CD8-positive, alpha-beta T cell (primary cell): ENCODE measurements at regions of chr12 and their contacts with region 1.

Region 1: GRCh38 chr12:13278249-13278787 is 81.8 kb downstream of the EMP1 start:
- DNase-seq: peak; percentile 13 to 73 (median 61)
- ATAC-seq: peak; percentile 64
- H3K4me3 ChIP-seq: no peak overlapping the region
- H3K4me3 Mint-ChIP-seq: no peak overlapping the region
- H3K27ac ChIP-seq: no peak overlapping the region
- H3K27ac Mint-ChIP-seq: no peak overlapping the region
- H3K4me1 ChIP-seq: no peaks in the 10 kb centered on the region
- H3K4me1 Mint-ChIP-seq: peaks cover 6% of the 10 kb centered on the region
- H3K27me3 ChIP-seq: peaks cover 0 to 6% of the 10 kb centered on the region in 2 experiments
- H3K27me3 Mint-ChIP-seq: peaks cover 44% of the 10 kb centered on the region
- CTCF ChIP-seq: peak; percentile 93

Region 2: DNA sequence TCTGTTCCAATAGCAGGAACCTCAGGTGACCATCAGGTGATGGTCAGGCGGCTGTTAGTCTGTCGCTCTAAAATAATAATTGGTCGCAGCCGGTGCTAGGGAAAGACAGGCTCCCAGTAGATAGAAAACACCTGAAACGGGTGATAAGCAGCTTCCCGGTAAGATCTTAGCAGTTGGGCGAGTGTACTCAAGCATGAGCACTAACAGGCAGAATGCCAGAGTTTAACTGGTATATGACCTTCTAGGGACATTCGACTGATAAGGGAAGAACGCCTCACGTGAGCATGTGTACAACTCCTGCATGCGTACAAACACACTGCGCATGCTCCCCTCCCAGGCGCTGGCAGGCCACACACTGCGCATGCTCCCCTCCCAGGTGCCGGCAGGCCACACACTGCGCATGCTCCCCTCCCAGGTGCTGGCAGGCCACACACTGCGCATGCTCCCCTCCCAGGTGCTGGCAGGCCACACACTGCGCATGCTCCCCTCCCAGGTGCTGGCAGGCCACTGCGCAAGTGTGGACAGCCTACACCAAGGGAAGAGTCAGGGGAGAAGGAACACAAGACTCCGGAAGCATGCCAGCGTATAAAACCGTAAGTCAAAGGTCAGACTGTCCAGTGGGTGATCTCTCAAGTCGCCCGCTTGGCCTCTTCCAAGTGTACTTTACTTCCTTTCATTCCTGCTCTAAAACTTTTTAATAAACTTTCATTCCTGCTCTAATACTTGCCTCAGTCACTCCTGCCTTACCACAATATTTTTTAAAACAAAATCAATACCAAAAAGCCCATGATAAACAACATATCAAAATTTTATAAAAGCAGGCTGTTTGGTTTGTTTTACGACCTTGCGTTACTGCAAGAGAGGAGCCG is 350.9 kb before region 1 on chr12:
- CTCF ChIA-PET with region 1: no interaction called
- POLR2A ChIA-PET with region 1: no interaction called
- intact Hi-C with region 1: no loop called
- DNase-seq: peak in 6 of 9 experiments; percentile 1 to 70 (median 36)
- ATAC-seq: no peak
- H3K4me3 ChIP-seq: peak overlapping the region in 1 of 2 experiments; percentile 22
- H3K4me3 Mint-ChIP-seq: no peak overlapping the region
- H3K27ac ChIP-seq: no peak overlapping the region
- H3K27ac Mint-ChIP-seq: no peak overlapping the region
- H3K4me1 ChIP-seq: no peaks in the 10 kb centered on the region
- H3K4me1 Mint-ChIP-seq: no peaks in the 10 kb centered on the region
- H3K27me3 ChIP-seq: no peaks in the 10 kb centered on the region
- H3K27me3 Mint-ChIP-seq: peaks cover 10% of the 10 kb centered on the region
- CTCF ChIP-seq: no peak

Region 3: DNA sequence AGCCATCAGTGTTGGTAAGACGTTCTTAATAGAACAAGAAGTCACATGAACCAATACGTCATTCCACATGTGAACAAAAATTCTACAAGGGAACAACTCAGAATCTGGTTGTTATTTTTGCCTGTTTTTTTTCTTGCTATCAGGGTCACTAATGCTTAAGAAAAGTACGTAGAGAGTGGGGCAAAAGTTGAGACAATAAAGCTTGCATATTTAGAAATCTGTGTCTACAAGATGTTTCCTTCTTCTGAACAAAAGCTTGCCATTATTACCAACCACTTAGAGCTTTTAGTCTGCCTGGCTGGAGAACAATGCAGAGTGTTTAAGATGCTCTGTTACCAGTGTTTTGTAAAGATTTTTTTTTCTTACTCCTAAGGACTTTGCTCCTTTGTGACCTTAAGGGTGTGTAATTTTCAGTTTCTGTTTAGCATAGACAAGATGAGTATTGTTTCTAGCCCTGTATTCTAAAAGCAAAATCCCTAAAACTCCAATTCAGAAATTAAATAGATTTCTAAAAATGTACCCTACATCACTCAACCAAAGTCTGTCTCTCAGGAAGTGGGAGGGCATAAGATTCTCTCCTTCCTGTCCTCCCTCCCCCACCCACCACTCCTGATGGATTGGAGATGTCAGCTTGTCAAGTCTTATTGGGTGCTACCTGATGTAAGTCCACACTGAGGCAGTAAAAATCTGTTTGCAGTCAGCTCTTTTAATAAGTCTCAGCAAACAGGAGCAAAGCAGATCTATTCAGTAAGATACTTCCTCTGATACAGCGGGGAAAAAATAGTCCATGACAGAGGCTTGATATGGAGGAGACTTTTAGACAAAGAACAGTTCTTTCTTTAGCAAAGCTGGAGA is 435.5 kb after region 1 on chr12:
- CTCF ChIA-PET with region 1: no interaction called
- POLR2A ChIA-PET with region 1: no interaction called
- intact Hi-C with region 1: no loop called
- DNase-seq: no peak
- ATAC-seq: no peak
- H3K4me3 ChIP-seq: no peak overlapping the region
- H3K4me3 Mint-ChIP-seq: no peak overlapping the region
- H3K27ac ChIP-seq: no peak overlapping the region
- H3K27ac Mint-ChIP-seq: no peak overlapping the region
- H3K4me1 ChIP-seq: no peaks in the 10 kb centered on the region
- H3K4me1 Mint-ChIP-seq: no peaks in the 10 kb centered on the region
- H3K27me3 ChIP-seq: no peaks in the 10 kb centered on the region
- H3K27me3 Mint-ChIP-seq: no peaks in the 10 kb centered on the region
- CTCF ChIP-seq: no peak

Region 4: DNA sequence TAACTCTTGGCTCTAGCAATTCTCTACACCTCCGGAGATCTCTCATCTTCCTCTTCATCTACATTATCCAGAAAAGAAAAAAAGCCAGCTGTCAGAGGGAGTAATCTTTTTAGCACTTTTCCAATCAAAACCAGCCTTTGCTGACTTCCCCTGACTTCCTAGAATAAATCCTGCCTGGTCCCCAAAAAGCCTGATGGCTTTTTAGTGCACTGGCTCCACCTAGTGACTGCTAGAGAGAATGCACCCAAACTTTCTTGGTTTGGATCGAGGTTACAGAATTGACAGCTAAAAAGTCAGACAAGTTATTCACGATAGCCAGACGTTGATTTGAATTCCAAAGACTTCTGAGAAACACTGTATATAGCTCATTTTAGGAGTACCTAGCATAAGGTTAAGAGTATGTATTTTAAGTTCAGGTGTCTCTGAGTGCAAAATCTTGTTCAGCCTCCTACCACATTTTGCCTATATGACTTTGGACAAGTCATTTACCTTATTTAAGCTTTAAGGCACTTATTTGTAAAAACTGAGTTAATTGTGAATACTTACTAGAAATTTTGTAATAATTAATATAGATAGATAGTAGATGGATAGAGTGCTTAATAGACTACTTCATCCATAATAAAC is 888.8 kb after region 1 on chr12:
- CTCF ChIA-PET with region 1: interaction called, 5 read pairs
- POLR2A ChIA-PET with region 1: no interaction called
- intact Hi-C with region 1: loop called in 1 of 2 experiments (anchors 1 kb)
- DNase-seq: peak in 7 of 9 experiments; percentile 4 to 55 (median 42)
- ATAC-seq: peak; percentile 48
- H3K4me3 ChIP-seq: no peak overlapping the region
- H3K4me3 Mint-ChIP-seq: no peak overlapping the region
- H3K27ac ChIP-seq: no peak overlapping the region
- H3K27ac Mint-ChIP-seq: no peak overlapping the region
- H3K4me1 ChIP-seq: no peaks in the 10 kb centered on the region
- H3K4me1 Mint-ChIP-seq: peaks cover 3% of the 10 kb centered on the region
- H3K27me3 ChIP-seq: no peaks in the 10 kb centered on the region
- H3K27me3 Mint-ChIP-seq: peaks cover 5% of the 10 kb centered on the region
- CTCF ChIP-seq: peak; percentile 91

Region 5: DNA sequence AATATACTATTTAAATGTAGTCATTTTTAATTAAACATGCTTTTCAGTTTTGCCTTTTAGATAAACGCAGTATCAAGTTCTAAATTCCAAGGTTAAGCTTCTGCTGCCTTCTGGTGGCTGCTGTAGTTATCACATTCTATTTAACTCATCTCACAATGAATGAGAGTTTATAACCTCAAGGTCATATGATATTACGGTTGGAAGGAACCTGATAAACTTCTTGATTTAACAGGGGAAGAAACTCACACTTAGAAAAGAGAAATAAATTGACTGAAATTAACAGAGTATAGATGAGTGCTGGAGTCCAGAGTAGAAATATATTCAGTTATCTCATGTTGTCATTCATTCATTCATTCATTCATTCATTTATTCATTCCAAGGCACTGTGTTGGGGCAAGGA is 1386.2 kb after region 1 on chr12:
- CTCF ChIA-PET with region 1: no interaction called
- POLR2A ChIA-PET with region 1: no interaction called
- intact Hi-C with region 1: loop called (anchors 5 to 10 kb)
- DNase-seq: peak in 6 of 9 experiments; percentile 7 to 66 (median 36)
- ATAC-seq: peak; percentile 85
- H3K4me3 ChIP-seq: no peak overlapping the region
- H3K4me3 Mint-ChIP-seq: no peak overlapping the region
- H3K27ac ChIP-seq: no peak overlapping the region
- H3K27ac Mint-ChIP-seq: no peak overlapping the region
- H3K4me1 ChIP-seq: no peaks in the 10 kb centered on the region
- H3K4me1 Mint-ChIP-seq: peaks cover 5% of the 10 kb centered on the region
- H3K27me3 ChIP-seq: no peaks in the 10 kb centered on the region
- H3K27me3 Mint-ChIP-seq: peaks cover 5% of the 10 kb centered on the region
- CTCF ChIP-seq: peak; percentile 87